Naive thymus-derived CD8-positive, alpha-beta T cell (primary cell): ENCODE measurements at regions of chr16 and their contacts with region 1.

Region 1: GRCh38 chr16:30417529-30418349 is 10.3 kb downstream of the ZNF771 start:
- DNase-seq: peak; percentile 82 to 94 (median 88)
- ATAC-seq: peak; percentile 80 to 85
- H3K4me3 Mint-ChIP-seq: peak overlapping the region; percentile 22 to 83 (median 72)
- H3K27ac Mint-ChIP-seq: peak overlapping the region in 8 of 10 donors; percentile 15 to 91 (median 83)
- H3K4me1 Mint-ChIP-seq: peaks cover 8 to 17% (median 11%) of the 10 kb centered on the region in 4 donors
- H3K27me3 Mint-ChIP-seq: no peaks in the 10 kb centered on the region

Region 2: GRCh38 chr16:30348113-30348512 is 69.6 kb before region 1 on chr16:
- POLR2A ChIA-PET with region 1: no interaction called
- DNase-seq: no peak
- ATAC-seq: no peak
- H3K4me3 Mint-ChIP-seq: no peak overlapping the region
- H3K27ac Mint-ChIP-seq: peak overlapping the region in 4 of 10 donors; percentile 32 to 58 (median 50)
- H3K4me1 Mint-ChIP-seq: peaks cover 4 to 31% (median 12%) of the 10 kb centered on the region in 4 donors
- H3K27me3 Mint-ChIP-seq: no peaks in the 10 kb centered on the region

Region 3: GRCh38 chr16:30370444-30371247 is 47.1 kb before region 1 on chr16 and contains the start of gene TBC1D10B:
- POLR2A ChIA-PET with region 1: interaction called, 16 read pairs
- DNase-seq: peak; percentile 90 to 100 (median 99)
- ATAC-seq: peak; percentile 81 to 87
- H3K4me3 Mint-ChIP-seq: peak within 1 kb of the TSS; percentile 79 to 92 (median 88)
- H3K27ac Mint-ChIP-seq: peak within 1 kb of the TSS; percentile 87 to 97 (median 93)
- H3K4me1 Mint-ChIP-seq: peaks cover 30 to 56% (median 49%) of the 10 kb centered on the region in 4 donors
- H3K27me3 Mint-ChIP-seq: no peaks in the 10 kb centered on the region
- polyA plus RNA-seq, gene TBC1D10B: 6.6 to 10.5 (median 7.3) TPM

Region 4: DNA sequence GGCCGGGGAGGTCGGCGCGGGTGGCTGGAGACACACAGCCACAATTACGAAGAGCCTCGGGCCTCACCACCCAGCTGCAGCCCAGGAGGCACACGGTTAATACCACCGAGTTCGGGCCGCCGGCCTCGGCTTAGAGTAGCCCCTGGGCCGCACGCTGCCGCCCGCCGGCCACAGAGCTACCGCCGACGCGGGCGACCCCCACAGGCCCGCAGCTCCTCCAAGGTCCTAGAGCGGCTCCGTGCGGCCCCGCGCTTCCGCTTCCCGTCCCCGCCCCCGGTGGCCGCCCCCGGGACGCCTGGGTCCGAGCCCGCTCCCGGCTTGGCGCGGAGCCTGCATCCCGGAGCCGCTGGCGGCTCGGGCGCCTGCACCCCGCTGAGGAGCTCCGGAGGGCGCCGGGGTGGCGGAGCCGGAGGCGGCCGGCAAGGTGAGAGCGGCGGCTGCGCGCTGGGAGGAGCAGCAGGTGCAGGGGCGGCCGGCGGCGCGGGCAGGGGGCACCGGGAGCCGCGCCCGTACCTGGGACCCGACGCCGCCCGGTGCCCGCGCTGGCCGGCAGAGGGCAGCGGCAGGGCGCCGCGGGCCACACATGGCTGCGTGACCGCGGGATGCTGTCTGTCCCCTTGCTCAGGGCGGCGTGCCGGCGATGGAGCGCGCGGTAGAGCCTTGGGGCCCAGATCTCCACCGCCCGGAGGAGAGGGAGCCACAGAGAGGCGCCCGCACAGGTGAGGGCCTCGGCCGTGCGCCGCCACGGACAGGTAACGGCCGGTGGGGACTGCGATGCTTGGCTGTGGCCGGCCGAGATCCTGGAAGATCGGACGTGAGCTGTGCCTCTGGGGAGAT is 22.4 kb before region 1 on chr16 and contains the start of gene ZNF48:
- POLR2A ChIA-PET with region 1: interaction called, 20 read pairs
- DNase-seq: peak in 9 of 10 donors; percentile 20 to 70 (median 56)
- ATAC-seq: peak; percentile 72
- H3K4me3 Mint-ChIP-seq: peak within 1 kb of the TSS; percentile 76 to 94 (median 86)
- H3K27ac Mint-ChIP-seq: peak within 1 kb of the TSS; percentile 69 to 94 (median 88)
- H3K4me1 Mint-ChIP-seq: peaks cover 21 to 49% (median 45%) of the 10 kb centered on the region in 4 donors
- H3K27me3 Mint-ChIP-seq: no peaks in the 10 kb centered on the region
- polyA plus RNA-seq, gene ZNF48: 6.1 to 11.7 (median 7.5) TPM

Region 5: GRCh38 chr16:30429678-30430427 is 12.1 kb after region 1 on chr16 and contains the start of gene DCTPP1:
- POLR2A ChIA-PET with region 1: interaction called, 75 read pairs
- DNase-seq: peak; percentile 84 to 99 (median 96)
- ATAC-seq: peak; percentile 97
- H3K4me3 Mint-ChIP-seq: no peak within 1 kb of the TSS
- H3K27ac Mint-ChIP-seq: peak within 1 kb of the TSS in 4 of 10 donors; percentile 52 to 80 (median 75)
- H3K4me1 Mint-ChIP-seq: peaks cover 5 to 35% (median 12%) of the 10 kb centered on the region in 4 donors
- H3K27me3 Mint-ChIP-seq: no peaks in the 10 kb centered on the region
- polyA plus RNA-seq, gene DCTPP1: 63.0 to 79.6 (median 64.0) TPM

Region 6: DNA sequence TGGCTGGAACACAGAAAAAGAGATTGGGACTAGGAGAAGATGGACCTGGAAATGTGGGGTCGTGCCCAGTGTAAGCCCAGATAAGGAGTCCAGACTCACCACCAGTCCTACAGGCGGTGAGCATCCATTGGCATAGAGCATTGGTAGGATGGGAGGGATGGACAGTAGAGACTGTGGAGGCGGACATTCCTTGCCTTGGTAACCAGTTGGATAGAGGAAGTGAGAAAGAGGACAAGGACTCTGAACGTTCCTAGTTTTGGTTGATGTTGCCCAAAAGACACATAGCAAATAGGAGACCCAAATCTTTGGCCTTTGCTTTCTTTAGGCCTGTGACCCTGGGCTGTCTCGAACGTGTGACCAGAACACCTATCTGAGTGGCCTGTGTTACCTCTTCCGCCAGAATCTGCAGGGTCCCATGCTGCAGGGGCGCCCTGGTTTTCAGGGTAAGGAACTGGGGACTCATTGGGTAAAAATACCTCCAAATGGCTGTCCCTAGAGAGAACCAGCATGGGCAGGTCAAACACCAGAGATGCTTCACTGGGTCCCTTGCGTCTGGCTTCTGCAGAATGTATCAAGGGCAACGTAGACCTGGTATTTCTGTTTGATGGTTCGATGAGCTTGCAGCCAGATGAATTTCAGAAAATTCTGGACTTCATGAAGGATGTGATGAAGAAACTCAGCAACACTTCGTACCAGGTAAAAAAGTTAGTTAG is 61.2 kb after region 1 on chr16:
- POLR2A ChIA-PET with region 1: no interaction called
- DNase-seq: no peak
- ATAC-seq: no peak
- H3K4me3 Mint-ChIP-seq: peak overlapping the region in 4 of 10 donors; percentile 6 to 62 (median 21)
- H3K27ac Mint-ChIP-seq: peak overlapping the region; percentile 5 to 92 (median 84)
- H3K4me1 Mint-ChIP-seq: peaks cover 26 to 71% (median 60%) of the 10 kb centered on the region in 4 donors
- H3K27me3 Mint-ChIP-seq: no peaks in the 10 kb centered on the region

Region 7: DNA sequence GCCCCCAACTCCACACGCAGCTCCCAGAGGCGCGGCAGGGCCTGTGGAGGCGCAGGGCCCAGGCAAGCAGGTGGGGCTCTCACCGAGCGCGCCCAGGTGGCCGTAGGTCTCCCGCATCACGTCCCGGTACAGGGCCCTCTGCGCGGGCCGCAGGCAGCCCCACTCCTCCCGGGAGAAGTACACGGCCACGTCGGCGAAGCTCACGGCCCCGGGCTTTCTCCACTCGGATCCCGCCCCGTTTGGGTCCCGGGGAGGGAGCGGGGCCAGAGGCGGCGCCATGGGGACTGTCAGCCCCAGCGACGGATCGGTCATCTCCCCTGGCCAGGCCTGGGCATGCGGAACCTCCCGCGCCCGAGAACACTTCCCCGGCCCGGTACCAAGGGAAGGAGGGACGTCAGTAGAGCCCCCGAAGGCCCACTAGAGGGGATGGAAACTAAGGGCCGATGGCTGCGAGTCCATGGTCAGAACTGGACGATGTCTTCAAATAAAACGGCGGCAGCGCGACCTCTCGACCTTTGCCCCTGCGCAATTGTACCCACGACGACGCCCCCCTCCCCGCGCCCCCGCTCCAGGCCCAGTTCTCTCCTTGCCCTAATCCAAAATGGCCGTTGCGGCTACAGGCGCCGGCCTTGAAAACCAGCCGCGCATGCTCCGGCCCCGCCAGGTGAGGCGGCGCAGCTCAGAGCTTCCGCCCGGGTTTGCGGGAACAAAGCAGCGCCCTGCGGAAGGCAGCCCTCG is 116.8 kb after region 1 on chr16 and contains the start of gene ZNF747:
- POLR2A ChIA-PET with region 1: interaction called, 22 read pairs
- DNase-seq: peak; percentile 87 to 95 (median 90)
- ATAC-seq: peak; percentile 82 to 83
- H3K4me3 Mint-ChIP-seq: peak within 1 kb of the TSS; percentile 90 to 99 (median 95)
- H3K27ac Mint-ChIP-seq: peak within 1 kb of the TSS; percentile 87 to 100 (median 98)
- H3K4me1 Mint-ChIP-seq: peaks cover 12 to 49% (median 36%) of the 10 kb centered on the region in 4 donors
- H3K27me3 Mint-ChIP-seq: no peaks in the 10 kb centered on the region
- polyA plus RNA-seq, gene ZNF747: 9.5 to 12.0 (median 11.4) TPM

Region 8: DNA sequence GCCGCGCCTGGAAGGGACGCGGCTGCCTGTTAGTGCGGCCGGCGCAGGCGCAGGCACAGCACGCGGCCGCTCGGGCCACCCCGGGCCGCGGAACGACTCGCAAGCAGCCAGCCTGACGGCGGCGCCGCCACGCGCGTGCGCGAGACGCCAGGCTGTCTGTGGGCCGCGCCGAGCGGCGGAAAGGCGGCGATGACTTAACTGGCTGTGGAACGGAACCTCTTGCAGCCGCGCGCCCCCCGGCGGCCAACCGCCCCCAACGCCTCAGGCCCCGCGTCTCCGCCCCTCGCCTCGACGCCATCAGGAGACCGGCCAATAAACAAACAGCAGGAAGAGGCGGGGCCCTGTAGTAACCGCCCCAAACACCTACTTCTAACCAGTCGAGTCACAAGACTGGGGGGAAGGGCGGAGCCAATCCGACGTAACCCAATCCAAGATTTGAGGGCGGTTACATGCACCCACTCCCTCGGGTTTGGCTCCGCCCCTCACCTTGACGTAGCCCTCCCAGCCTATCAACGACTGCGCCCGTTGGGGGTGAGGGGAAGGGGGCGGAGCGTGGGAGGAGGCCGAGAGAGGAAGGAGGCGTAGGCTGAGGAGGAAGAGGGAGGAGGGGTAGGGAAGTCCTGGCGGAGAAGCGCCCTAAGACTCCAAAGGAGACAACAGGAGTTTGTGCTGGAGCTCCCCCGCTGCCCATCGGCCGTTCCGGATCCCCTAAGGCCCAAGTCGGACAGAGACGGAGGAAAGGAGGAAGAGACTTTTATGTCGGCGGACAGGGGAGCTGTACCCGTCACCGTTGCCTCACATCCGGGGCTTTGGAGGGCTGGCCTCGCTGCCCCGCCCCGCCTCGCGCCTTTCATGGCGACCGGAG is 240.4 kb after region 1 on chr16 and contains the start of gene FBRS:
- POLR2A ChIA-PET with region 1: interaction called, 10 read pairs
- DNase-seq: peak in 9 of 10 donors; percentile 99 to 100 (median 100)
- ATAC-seq: peak; percentile 66 to 72
- H3K4me3 Mint-ChIP-seq: peak within 1 kb of the TSS; percentile 90 to 99 (median 94)
- H3K27ac Mint-ChIP-seq: peak within 1 kb of the TSS; percentile 99 to 100 (median 100)
- H3K4me1 Mint-ChIP-seq: peaks cover 20 to 46% (median 42%) of the 10 kb centered on the region in 4 donors
- H3K27me3 Mint-ChIP-seq: no peaks in the 10 kb centered on the region
- polyA plus RNA-seq, gene FBRS: 3.2 to 8.0 (median 4.4) TPM